ENCODE measurements at regions of chr4 and their contacts with region 1.

Region 1: DNA sequence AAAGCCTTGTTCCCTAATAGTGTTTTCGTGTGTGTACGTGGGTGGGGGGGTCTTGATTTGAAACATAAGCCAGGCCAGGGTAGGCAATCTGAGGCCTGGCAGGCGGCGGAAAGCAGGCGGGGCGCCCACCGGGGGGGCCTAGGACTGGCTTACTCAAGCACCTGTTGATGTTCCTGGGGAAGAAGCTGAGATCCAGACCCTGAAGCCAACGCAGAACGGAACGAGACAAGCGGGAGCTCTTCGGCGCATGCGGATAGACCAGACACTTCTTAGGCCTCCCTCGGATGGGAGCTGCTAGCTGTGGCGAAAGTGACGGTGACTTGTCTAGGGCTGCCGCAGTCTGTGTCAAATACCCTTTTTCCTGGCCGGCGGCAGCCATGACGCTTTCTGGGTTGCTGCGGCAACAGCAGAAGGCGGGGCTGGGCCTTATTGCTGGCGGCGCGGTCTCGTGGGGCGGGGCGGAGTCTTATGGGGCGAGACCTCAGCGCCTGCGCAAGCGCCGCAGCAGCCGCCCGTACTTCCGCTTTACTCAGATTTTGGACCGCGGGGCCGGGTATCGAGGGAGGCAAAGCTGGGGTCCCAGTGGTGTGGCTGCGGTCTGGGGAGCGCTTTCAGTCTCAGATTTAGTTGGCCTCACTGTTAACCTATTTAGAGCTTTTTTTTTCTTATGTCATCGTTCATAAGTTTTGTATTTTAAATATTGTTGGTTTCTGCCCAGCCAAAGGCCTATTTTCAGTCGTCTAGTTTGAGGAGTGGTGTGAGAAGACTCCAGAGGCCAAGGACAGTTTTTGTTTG is at the start of gene SPATA4:
- DNase-seq: peak; percentile 94 to 97 (median 96)
- ATAC-seq: peak; percentile 99 to 100 (median 100)
- H3K4me3 ChIP-seq: peak within 1 kb of the TSS; percentile 15 to 82 (median 64)
- H3K27ac ChIP-seq: peak within 1 kb of the TSS; percentile 23 to 90 (median 81)
- H3K4me1 ChIP-seq: peaks cover 0 to 10% (median 2%) of the 10 kb centered on the region in 12 donors
- H3K27me3 ChIP-seq: peaks cover 0 to 13% (median 0%) of the 10 kb centered on the region in 9 donors
- CTCF ChIP-seq: no peak
- POLR2A ChIP-seq: peak; percentile 25 to 75
- total RNA-seq, gene SPATA4: 0.25 to 0.84 (median 0.64) TPM in 5 of 9 donors, not detected in the others

Region 2: DNA sequence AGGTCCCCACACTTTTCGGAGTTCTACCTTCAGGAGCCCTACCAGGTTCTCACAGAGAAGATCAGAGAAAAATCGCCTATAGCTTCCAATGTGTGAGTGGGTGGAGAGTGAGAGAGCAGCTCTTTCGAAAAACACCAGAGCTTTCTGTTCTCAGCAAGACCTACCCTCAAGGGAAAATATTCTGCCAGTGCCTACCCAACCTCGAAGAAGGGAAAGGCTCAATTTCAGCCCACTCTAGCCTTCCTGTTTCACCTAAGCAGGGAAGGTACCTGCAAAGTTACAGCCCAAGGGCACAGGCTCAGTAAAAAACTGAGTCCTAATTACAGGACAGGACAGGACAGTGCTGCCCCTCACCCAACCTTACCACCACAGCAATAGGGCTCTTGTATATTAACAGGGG is 233.8 kb before region 1 on chr4:
- intact Hi-C with region 1: no loop called
- DNase-seq: no peak
- ATAC-seq: no peak
- H3K4me3 ChIP-seq: no peak overlapping the region
- H3K27ac ChIP-seq: no peak overlapping the region
- H3K4me1 ChIP-seq: no peaks in the 10 kb centered on the region
- H3K27me3 ChIP-seq: no peaks in the 10 kb centered on the region
- CTCF ChIP-seq: no peak
- POLR2A ChIP-seq: no peak

Region 3: DNA sequence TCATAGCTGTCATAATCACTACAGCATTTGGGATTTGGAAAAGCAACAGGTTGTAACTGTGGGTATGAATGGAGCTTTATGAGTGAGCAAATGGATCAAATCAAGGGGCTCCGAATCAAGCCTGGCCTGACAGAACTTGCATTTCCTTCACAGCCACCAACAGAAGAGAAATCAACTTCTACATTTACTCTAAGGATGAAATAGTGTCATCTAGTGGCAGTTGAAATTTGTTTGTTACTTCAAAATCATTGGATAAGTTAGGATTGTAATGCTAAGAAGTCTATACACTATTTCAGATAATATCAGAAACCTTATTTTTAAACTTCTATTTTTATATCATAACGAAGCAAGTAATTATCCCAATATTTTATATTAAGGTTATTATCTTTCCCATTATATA is 140.4 kb before region 1 on chr4:
- intact Hi-C with region 1: no loop called
- DNase-seq: no peak
- ATAC-seq: no peak
- H3K4me3 ChIP-seq: no peak overlapping the region
- H3K27ac ChIP-seq: no peak overlapping the region
- H3K4me1 ChIP-seq: no peaks in the 10 kb centered on the region
- H3K27me3 ChIP-seq: no peaks in the 10 kb centered on the region
- CTCF ChIP-seq: peak in 4 of 12 donors; percentile 16 to 42 (median 34)
- POLR2A ChIP-seq: no peak

Region 4: GRCh38 chr4:176150356-176150682 is 45.1 kb before region 1 on chr4:
- intact Hi-C with region 1: loop called in 1 of 10 experiments (anchors 2 kb)
- DNase-seq: no peak
- ATAC-seq: peak in 2 of 4 donors; percentile 60 to 64
- H3K4me3 ChIP-seq: no peak overlapping the region
- H3K27ac ChIP-seq: no peak overlapping the region
- H3K4me1 ChIP-seq: peaks cover 0 to 7% (median 0%) of the 10 kb centered on the region in 12 donors
- H3K27me3 ChIP-seq: no peaks in the 10 kb centered on the region
- CTCF ChIP-seq: peak; percentile 18 to 63 (median 48)
- POLR2A ChIP-seq: no peak

Region 5: GRCh38 chr4:176230836-176231235 is 35.5 kb after region 1 on chr4:
- intact Hi-C with region 1: loop called in 5 of 10 experiments (anchors 2 to 5 kb)
- DNase-seq: no peak
- ATAC-seq: peak; percentile 56 to 88 (median 68)
- H3K4me3 ChIP-seq: peak overlapping the region in 6 of 12 donors; percentile 11 to 32 (median 22)
- H3K27ac ChIP-seq: peak overlapping the region in 11 of 12 donors; percentile 11 to 79 (median 62)
- H3K4me1 ChIP-seq: peaks cover 0 to 25% (median 8%) of the 10 kb centered on the region in 12 donors
- H3K27me3 ChIP-seq: no peaks in the 10 kb centered on the region
- CTCF ChIP-seq: no peak
- POLR2A ChIP-seq: no peak

Region 6: DNA sequence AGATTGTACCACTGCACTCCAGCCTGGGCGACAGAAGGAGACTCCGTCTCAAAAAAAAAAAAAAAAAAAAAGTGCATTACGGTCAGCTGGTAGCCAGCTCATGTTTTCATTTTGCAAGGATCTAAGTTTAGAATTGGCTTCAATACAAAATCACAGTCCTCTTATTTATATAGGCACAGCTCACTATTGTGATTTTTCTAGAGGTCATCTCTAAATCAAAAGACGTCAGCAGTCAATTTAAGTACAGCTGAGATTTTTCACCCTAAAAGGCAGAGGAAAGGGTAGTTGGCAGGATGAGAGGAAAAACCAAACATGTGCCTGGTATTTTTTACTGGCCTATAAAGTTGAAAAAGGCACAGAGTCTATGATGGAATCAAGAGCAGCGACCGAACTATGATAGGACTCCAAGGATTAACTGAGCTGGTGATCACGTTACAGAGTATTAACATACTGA is 42.8 kb after region 1 on chr4:
- intact Hi-C with region 1: loop called in 4 of 10 experiments (anchors 2 to 5 kb)
- DNase-seq: no peak
- ATAC-seq: peak; percentile 74 to 89 (median 82)
- H3K4me3 ChIP-seq: peak overlapping the region in 6 of 12 donors; percentile 6 to 15 (median 8)
- H3K27ac ChIP-seq: peak overlapping the region; percentile 71 to 94 (median 84)
- H3K4me1 ChIP-seq: peaks cover 0 to 25% (median 7%) of the 10 kb centered on the region in 12 donors
- H3K27me3 ChIP-seq: no peaks in the 10 kb centered on the region
- CTCF ChIP-seq: no peak
- POLR2A ChIP-seq: no peak

Region 7: DNA sequence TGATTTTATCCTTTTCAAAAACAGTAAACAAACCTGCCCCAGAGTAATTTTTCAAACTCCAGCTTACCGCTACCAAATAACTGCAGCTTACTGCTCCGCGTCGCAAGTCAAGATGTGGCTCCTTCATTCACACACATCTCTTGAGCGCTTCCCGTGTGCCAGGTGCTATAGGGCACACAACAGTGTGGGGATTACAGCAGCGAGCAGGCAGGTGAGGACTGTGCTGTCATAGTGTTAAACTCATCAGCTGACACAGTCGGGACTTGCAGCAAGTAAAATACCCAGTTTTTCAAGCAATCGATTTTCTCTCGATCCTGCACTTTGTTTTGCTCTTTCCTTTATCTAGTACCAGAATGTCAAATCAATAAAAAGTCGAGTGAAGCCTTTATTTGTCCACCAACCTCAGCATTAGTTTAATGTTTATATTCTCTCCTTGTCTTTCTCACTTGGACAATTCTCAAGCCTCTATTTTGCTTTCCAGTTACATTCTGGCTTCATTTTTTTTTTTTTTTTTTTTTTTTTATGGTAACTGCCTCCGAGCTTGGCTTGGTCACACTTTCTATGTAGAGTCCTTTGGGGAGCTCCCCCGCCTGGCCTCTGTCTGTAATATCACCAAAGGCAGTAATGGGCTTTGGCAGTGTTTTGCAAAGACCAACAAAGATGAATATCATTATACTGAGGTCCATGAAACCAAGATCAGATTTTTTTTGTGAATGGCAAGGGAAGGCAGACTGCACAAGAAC is 82.0 kb after region 1 on chr4:
- intact Hi-C with region 1: loop called in 4 of 10 experiments (anchors 2 to 10 kb)
- DNase-seq: peak in 4 of 5 donors; percentile 33 to 58 (median 48)
- ATAC-seq: peak in 3 of 4 donors; percentile 83 to 88 (median 83)
- H3K4me3 ChIP-seq: peak overlapping the region in 1 of 12 donors; percentile 3
- H3K27ac ChIP-seq: peak overlapping the region in 1 of 12 donors; percentile 70
- H3K4me1 ChIP-seq: peaks cover 0 to 7% (median 0%) of the 10 kb centered on the region in 12 donors
- H3K27me3 ChIP-seq: no peaks in the 10 kb centered on the region
- CTCF ChIP-seq: peak; percentile 26 to 67 (median 52)
- POLR2A ChIP-seq: no peak